A673 (cell line): ENCODE measurements at regions of chr4 and their contacts with region 1.

Region 1: DNA sequence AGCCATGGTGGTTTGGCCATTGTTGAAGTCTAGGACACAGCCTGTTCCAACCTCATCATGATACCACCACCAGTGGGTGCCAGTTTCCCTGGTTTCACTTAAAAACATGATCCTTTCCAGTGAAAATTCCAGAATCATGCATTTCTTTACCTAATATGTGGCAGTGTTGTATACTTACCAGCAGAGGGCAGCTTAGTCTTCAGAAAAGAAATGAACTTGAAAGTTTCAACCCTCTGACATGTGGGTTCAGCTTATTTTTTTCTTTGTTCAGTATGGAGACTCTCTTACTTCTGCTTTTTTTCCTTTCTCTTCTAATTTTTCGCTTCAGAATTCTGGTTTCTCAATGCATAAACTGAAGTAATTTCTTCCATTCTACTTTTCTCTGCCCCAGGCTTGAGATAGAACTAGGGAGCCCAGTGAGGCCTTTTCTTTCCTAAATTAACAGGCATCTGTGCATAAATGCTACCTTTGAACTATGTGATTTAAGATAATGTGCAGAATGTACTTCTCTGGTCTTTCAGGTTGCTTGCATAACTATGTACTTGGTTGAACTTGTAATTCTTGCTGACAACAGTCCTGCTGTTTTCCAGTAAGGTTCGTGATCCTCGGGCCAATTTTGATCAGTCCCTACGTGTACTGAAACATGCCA is 10.7 kb downstream of the LIAS start:
- DNase-seq: peak; percentile 92
- H3K4me3 ChIP-seq: no peak overlapping the region
- H3K27ac ChIP-seq: peak overlapping the region; percentile 28
- H3K4me1 ChIP-seq: peaks cover 8% of the 10 kb centered on the region
- H3K27me3 ChIP-seq: no peaks in the 10 kb centered on the region
- CTCF ChIP-seq: peak; percentile 93

Region 2: DNA sequence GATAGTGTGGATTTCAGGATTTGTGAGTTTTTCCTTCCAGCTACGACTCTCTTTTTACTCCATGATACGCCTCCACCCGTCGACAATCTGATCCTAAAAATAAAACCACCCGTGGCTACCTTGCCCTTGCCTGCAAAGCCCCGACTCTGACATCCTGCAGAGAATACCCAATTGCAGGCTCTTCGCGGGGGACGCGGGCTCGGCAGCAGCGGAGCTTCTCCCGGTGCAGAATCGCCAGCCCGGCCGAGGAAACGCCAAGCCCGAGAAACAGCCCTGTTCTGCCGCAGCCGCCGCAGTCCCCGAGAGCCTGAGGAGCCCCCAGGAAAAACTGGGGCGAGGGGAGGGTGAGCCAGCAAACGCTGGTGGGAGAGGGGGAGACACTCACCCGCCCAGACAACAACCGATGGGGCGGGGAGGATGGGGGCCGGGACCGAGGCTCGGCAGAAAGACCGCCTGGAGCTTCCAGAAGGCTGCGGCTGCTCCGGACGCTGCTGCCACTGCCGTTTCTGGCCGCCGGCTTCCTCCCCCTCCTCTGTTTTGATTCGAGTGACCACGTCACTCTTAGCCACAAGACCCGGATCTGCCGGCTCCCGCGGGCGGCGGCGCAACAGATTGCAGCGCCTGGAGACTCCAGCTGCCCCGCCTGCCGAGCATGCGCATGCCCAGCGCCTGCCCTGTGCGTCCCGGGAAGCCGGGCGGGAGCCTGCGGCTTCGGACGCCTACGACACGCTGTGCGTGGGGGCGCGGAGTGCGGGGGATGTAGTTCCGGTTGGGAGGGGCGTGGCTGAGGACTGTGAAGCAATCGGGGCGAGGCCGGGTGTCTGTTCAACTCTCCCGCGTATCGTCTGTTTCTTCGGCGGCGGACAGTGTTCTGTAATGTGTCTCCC is 169.0 kb after region 1 on chr4 and contains the start of gene SMIM14:
- CTCF ChIA-PET with region 1: interaction called, 3 read pairs
- POLR2A ChIA-PET with region 1: no interaction called
- intact Hi-C with region 1: loop called (anchors 2 kb)
- DNase-seq: peak; percentile 99
- H3K4me3 ChIP-seq: peak within 1 kb of the TSS; percentile 95
- H3K27ac ChIP-seq: peak within 1 kb of the TSS; percentile 91
- H3K4me1 ChIP-seq: peaks cover 10% of the 10 kb centered on the region
- H3K27me3 ChIP-seq: no peaks in the 10 kb centered on the region
- CTCF ChIP-seq: no peak
- total RNA-seq, gene SMIM14: 14.4 and 14.5 TPM in 2 replicates

Region 3: DNA sequence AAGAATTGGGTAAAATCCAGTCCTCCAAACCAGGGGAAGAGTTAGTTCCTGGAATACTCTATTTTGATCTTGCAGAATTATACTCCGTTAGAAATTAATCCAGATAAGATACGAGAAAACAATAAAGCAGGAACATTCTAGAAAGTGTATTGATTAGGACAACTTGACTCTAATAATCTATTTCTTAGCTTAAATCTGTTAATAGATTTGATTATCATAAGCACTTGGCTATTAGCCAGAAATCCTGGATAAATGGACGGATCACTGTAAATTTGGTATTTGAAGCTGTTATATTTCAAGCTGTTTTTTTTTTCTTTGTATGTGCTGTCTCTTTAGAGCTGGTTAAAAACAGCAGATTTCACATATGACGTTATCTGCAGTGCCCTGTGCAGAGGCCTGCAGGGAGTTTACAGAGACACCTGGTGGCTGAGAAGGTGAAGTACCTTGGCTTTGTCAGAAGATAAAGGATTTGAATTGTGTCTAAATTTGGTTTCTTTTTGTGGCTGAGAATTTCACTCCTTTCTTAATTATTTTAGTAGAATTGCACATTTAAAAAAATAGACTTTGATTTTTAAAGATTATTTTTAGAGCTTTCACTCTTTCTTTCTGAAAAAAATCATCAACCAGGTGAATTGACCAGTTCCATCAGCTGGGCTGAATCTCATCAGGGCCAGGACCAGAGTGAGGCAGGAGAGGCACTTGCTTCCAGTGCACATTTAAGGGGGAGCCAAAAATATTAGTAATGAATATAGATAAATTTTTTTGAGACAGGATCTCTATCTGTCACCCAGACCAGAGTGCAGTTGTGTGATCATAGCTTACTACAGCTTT is 855.9 kb after region 1 on chr4:
- CTCF ChIA-PET with region 1: no interaction called
- POLR2A ChIA-PET with region 1: no interaction called
- intact Hi-C with region 1: loop called (anchors 10 kb)
- DNase-seq: peak; percentile 87
- H3K4me3 ChIP-seq: no peak overlapping the region
- H3K27ac ChIP-seq: no peak overlapping the region
- H3K4me1 ChIP-seq: peaks cover 20% of the 10 kb centered on the region
- H3K27me3 ChIP-seq: no peaks in the 10 kb centered on the region
- CTCF ChIP-seq: peak; percentile 90